IMR-90 (cell line): ENCODE measurements at regions of chr2 and their contacts with region 1.

Region 1: DNA sequence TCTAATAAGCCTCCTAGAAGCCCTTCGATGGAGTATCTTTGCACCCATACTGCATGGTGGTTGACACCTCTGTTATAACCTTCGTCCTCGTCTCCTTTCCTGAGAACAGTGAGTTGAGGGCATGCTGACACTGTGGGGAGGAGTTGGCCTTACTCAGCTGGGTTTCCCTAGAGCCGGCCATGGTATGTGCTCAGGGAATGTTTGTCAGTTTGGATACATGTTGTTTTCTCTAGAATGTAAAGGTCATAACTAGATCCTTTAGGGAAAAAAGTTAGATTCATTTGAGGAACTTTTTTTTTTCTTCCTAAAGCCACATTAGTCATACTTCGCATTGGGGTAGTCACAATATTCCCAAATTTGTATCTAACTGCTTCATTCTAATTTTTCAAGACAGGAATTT is 106.0 kb upstream of the FOSL2 start:
- DNase-seq: peak; percentile 60
- ATAC-seq: peak; percentile 92
- H3K4me3 ChIP-seq: no peak overlapping the region
- H3K27ac ChIP-seq: peak overlapping the region; percentile 77
- H3K4me1 ChIP-seq: peaks cover 13% of the 10 kb centered on the region
- H3K27me3 ChIP-seq: no peaks in the 10 kb centered on the region
- CTCF ChIP-seq: no peak
- POLR2A ChIP-seq: no peak
- RAD21 ChIP-seq: no peak

Region 2: GRCh38 chr2:28233164-28233676 is 53.5 kb before region 1 on chr2:
- CTCF ChIA-PET with region 1: no interaction called
- POLR2A ChIA-PET with region 1: no interaction called
- dilution Hi-C with region 1: no loop called
- in situ Hi-C with region 1: no loop called
- intact Hi-C with region 1: loop called (anchors 1 kb)
- DNase-seq: peak; percentile 81
- ATAC-seq: peak; percentile 87
- H3K4me3 ChIP-seq: no peak overlapping the region
- H3K27ac ChIP-seq: peak overlapping the region; percentile 94; the same call in 1 of the 2 replicates
- H3K4me1 ChIP-seq: peaks cover 14% of the 10 kb centered on the region
- H3K27me3 ChIP-seq: no peaks in the 10 kb centered on the region
- CTCF ChIP-seq: no peak
- POLR2A ChIP-seq: no peak
- RAD21 ChIP-seq: no peak